HepG2 (cell line): ENCODE measurements at regions of chr5 and their contacts with region 1.

Region 1: DNA sequence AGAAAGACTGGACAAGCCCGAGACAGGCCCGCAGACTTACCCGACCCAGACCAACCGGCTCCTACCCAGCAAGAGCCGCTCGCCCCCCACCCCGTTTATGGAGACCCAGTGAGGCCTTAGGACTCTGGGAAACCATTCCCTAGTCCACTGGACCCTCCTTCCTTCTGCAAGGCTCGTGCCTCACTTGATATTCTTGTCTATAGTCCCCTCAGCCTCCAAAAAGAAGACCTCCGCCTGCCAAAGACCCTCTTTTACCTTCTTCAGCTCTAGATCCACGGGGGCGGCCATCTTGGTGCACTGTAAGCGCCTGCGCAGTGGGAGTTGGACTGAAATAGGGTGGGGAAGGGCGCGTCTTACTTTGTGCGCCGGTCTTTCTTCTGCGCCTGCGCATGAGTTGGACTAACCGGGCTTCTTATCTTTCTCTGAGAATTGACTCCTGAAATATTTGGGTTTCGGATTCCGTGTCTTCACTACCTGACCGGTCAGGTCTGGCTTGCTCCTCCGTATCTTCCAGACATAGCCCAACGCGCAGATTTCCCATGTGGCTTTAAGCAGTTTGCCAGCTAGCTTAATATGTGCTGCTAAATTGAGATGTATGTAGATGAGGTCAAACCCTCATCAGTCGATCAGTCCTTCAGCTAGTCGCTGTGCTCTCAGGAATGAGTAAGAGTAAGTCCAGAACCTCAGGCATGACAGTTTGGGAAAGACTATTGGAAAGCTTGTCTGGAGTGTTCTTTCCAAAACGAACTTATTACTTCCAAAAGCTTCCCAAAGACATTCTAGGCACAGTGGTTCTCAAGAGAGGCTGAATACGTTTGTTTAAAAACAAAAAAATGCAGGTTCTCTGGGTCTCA is at the start of gene PFDN1:
- DNase-seq: peak; percentile 95
- ATAC-seq: peak; percentile 96
- H3K4me3 ChIP-seq: peak within 1 kb of the TSS; percentile 84 to 90 (median 89)
- H3K27ac ChIP-seq: peak within 1 kb of the TSS; percentile 79
- H3K4me1 ChIP-seq: peaks cover 53% of the 10 kb centered on the region
- H3K27me3 ChIP-seq: no peaks in the 10 kb centered on the region; a peak in 1 of 5 replicates
- CTCF ChIP-seq: no peak
- EP300 ChIP-seq: no peak
- POLR2A ChIP-seq: peak; percentile 63 to 74; a peak in 3 of 4 replicates
- RAD21 ChIP-seq: no peak
- total RNA-seq, gene PFDN1: 70.8 and 102 TPM in 2 replicates

Region 2: DNA sequence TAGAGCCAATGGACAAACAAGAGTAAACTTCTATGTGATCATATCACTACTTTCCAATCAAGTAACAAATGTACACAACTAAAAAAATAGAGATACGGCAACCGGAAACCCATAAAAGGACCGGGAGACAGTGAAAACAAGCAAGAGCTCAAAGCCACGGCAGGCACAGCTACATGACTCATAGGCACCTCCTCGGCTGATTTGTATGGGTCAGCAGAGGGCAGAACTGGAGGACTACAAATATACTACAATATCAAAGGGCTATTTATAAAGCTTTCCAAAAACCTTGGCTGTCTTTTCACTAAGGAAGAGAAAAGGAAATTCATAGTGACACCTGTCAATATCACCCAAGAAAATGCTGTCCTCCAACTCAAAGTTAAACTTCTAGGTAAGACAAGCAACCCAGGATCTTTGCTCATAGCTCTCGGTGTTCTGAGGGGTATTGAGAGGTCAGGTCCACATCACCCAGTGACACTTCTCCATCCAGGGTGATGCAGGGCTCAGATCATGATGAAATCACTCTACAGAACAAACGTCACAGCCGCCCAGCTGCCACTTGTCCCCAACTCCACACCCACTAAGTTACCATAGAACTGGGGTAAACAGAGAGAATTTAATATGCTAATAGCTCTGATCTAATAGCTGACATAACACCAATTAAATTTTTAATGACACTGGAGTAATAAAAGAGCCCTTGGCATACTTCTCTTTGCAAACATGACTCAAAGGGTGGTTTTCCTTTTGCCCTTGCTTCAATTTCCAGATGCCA is 41.4 kb before region 1 on chr5:
- CTCF ChIA-PET with region 1: no interaction called
- POLR2A ChIA-PET with region 1: interaction called, 3 read pairs
- in situ Hi-C with region 1: no loop called
- intact Hi-C with region 1: loop called (anchors 5 kb)
- DNase-seq: peak; percentile 85
- ATAC-seq: peak; percentile 97
- H3K4me3 ChIP-seq: peak overlapping the region in 1 of 3 experiments; percentile 11; a peak in 1 of 6 replicates
- H3K27ac ChIP-seq: peak overlapping the region; percentile 41
- H3K4me1 ChIP-seq: peaks cover 37% of the 10 kb centered on the region
- H3K27me3 ChIP-seq: no peaks in the 10 kb centered on the region
- CTCF ChIP-seq: peak; percentile 38
- EP300 ChIP-seq: no peak
- POLR2A ChIP-seq: no peak
- RAD21 ChIP-seq: no peak

Region 3: DNA sequence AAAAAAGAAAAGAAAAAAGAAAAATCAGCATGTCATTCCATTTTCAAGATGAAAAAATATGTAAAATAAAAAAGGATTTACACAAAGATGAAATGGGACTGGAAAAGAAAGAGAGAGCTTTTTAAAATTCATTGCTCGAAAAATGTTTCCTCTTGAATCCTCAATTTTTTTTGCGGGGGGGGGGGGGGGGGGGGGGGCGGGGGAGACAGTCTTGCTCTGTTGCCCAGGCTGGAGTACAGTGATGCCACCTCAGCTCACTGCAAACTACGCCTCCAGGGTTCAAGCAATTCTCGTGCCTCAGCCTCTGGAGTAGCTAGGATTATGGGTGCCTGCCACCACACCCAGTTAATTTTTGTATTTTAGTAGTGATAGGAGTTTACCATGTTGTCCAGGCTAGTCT is 16.6 kb before region 1 on chr5:
- CTCF ChIA-PET with region 1: no interaction called
- POLR2A ChIA-PET with region 1: no interaction called
- in situ Hi-C with region 1: no loop called
- intact Hi-C with region 1: no loop called
- DNase-seq: no peak
- ATAC-seq: no peak
- H3K4me3 ChIP-seq: no peak overlapping the region
- H3K27ac ChIP-seq: no peak overlapping the region
- H3K4me1 ChIP-seq: peaks cover 36% of the 10 kb centered on the region
- H3K27me3 ChIP-seq: no peaks in the 10 kb centered on the region
- CTCF ChIP-seq: no peak
- EP300 ChIP-seq: no peak
- POLR2A ChIP-seq: no peak
- RAD21 ChIP-seq: no peak

Region 4: GRCh38 chr5:140336388-140336787 is 33.4 kb after region 1 on chr5:
- CTCF ChIA-PET with region 1: no interaction called
- POLR2A ChIA-PET with region 1: interaction called, 10 read pairs
- in situ Hi-C with region 1: no loop called
- intact Hi-C with region 1: no loop called
- DNase-seq: peak; percentile 63
- ATAC-seq: peak; percentile 93
- H3K4me3 ChIP-seq: no peak overlapping the region
- H3K27ac ChIP-seq: peak overlapping the region; percentile 1
- H3K4me1 ChIP-seq: peaks cover 28% of the 10 kb centered on the region
- H3K27me3 ChIP-seq: no peaks in the 10 kb centered on the region
- CTCF ChIP-seq: peak; percentile 45
- EP300 ChIP-seq: no peak
- POLR2A ChIP-seq: no peak
- RAD21 ChIP-seq: no peak